ENCODE measurements at regions of chr22 and their contacts with region 1.

Region 1: GRCh38 chr22:31661851-31662656 is at the start of gene PISD:
- DNase-seq: peak; percentile 92 to 99 (median 96)
- ATAC-seq: peak; percentile 90
- H3K4me3 ChIP-seq: peak within 1 kb of the TSS; percentile 95
- H3K4me3 Mint-ChIP-seq: peak within 1 kb of the TSS; percentile 99
- H3K27ac ChIP-seq: peak within 1 kb of the TSS; percentile 62 to 70
- H3K27ac Mint-ChIP-seq: peak within 1 kb of the TSS; percentile 98
- H3K4me1 ChIP-seq: peaks cover 29% of the 10 kb centered on the region
- H3K4me1 Mint-ChIP-seq: peaks cover 38% of the 10 kb centered on the region
- H3K27me3 ChIP-seq: no peaks in the 10 kb centered on the region
- H3K27me3 Mint-ChIP-seq: no peaks in the 10 kb centered on the region
- CTCF ChIP-seq: no peak
- total RNA-seq, gene PISD: 23.4 to 25.3 TPM

Region 2: DNA sequence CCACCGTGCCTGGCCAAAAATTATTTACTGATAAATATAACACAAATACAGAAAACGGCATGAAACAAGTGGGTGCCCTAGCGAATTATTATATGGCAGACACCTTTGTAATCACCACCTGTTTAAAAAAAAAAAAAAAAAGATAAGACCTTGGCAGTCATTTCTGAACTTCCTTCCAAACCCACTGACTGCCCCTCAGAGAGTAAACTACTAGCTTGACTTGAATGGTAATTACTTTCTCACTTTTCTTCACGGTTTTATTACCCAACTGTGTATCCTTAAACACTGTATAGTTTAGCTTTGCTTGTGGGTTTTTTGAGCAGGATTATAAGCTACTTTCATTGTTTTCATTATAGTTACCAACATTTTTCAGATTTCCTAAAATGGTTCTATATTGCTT is 142.0 kb before region 1 on chr22:
- CTCF ChIA-PET with region 1: no interaction called
- POLR2A ChIA-PET with region 1: no interaction called
- intact Hi-C with region 1: no loop called
- DNase-seq: no peak
- ATAC-seq: no peak
- H3K4me3 ChIP-seq: no peak overlapping the region
- H3K4me3 Mint-ChIP-seq: no peak overlapping the region
- H3K27ac ChIP-seq: no peak overlapping the region
- H3K27ac Mint-ChIP-seq: peak overlapping the region; percentile 67
- H3K4me1 ChIP-seq: peaks cover 19% of the 10 kb centered on the region
- H3K4me1 Mint-ChIP-seq: peaks cover 48% of the 10 kb centered on the region
- H3K27me3 ChIP-seq: no peaks in the 10 kb centered on the region
- H3K27me3 Mint-ChIP-seq: no peaks in the 10 kb centered on the region
- CTCF ChIP-seq: no peak

Region 3: GRCh38 chr22:31630331-31631329 is 31.4 kb before region 1 on chr22:
- CTCF ChIA-PET with region 1: no interaction called
- POLR2A ChIA-PET with region 1: interaction called, 21 read pairs
- intact Hi-C with region 1: no loop called
- DNase-seq: peak; percentile 73 to 95 (median 86)
- ATAC-seq: peak; percentile 91
- H3K4me3 ChIP-seq: peak overlapping the region; percentile 74
- H3K4me3 Mint-ChIP-seq: peak overlapping the region; percentile 90
- H3K27ac ChIP-seq: peak overlapping the region; percentile 85 to 91
- H3K27ac Mint-ChIP-seq: peak overlapping the region; percentile 94
- H3K4me1 ChIP-seq: peaks cover 65% of the 10 kb centered on the region
- H3K4me1 Mint-ChIP-seq: peaks cover 41% of the 10 kb centered on the region
- H3K27me3 ChIP-seq: no peaks in the 10 kb centered on the region
- H3K27me3 Mint-ChIP-seq: no peaks in the 10 kb centered on the region
- CTCF ChIP-seq: no peak

Region 4: GRCh38 chr22:31683181-31684105 is 21.4 kb after region 1 on chr22:
- CTCF ChIA-PET with region 1: interaction called, 6 read pairs
- POLR2A ChIA-PET with region 1: no interaction called
- intact Hi-C with region 1: loop called in 1 of 2 experiments (anchors 1 kb)
- DNase-seq: no peak
- ATAC-seq: no peak
- H3K4me3 ChIP-seq: no peak overlapping the region
- H3K4me3 Mint-ChIP-seq: no peak overlapping the region
- H3K27ac ChIP-seq: no peak overlapping the region
- H3K27ac Mint-ChIP-seq: peak overlapping the region; percentile 18
- H3K4me1 ChIP-seq: no peaks in the 10 kb centered on the region
- H3K4me1 Mint-ChIP-seq: no peaks in the 10 kb centered on the region
- H3K27me3 ChIP-seq: no peaks in the 10 kb centered on the region
- H3K27me3 Mint-ChIP-seq: no peaks in the 10 kb centered on the region
- CTCF ChIP-seq: no peak

Region 5: GRCh38 chr22:31707519-31707918 is 45.5 kb after region 1 on chr22:
- CTCF ChIA-PET with region 1: no interaction called
- POLR2A ChIA-PET with region 1: no interaction called
- intact Hi-C with region 1: no loop called
- DNase-seq: no peak
- ATAC-seq: no peak
- H3K4me3 ChIP-seq: no peak overlapping the region
- H3K4me3 Mint-ChIP-seq: no peak overlapping the region
- H3K27ac ChIP-seq: no peak overlapping the region
- H3K27ac Mint-ChIP-seq: no peak overlapping the region
- H3K4me1 ChIP-seq: no peaks in the 10 kb centered on the region
- H3K4me1 Mint-ChIP-seq: no peaks in the 10 kb centered on the region
- H3K27me3 ChIP-seq: no peaks in the 10 kb centered on the region
- H3K27me3 Mint-ChIP-seq: no peaks in the 10 kb centered on the region
- CTCF ChIP-seq: no peak

Region 6: GRCh38 chr22:32080904-32081303 is 418.9 kb after region 1 on chr22:
- CTCF ChIA-PET with region 1: no interaction called
- POLR2A ChIA-PET with region 1: no interaction called
- intact Hi-C with region 1: loop called (anchors 5 kb)
- DNase-seq: peak in 6 of 14 experiments; percentile 2 to 64 (median 39)
- ATAC-seq: peak; percentile 67
- H3K4me3 ChIP-seq: no peak overlapping the region
- H3K4me3 Mint-ChIP-seq: no peak overlapping the region
- H3K27ac ChIP-seq: no peak overlapping the region
- H3K27ac Mint-ChIP-seq: no peak overlapping the region
- H3K4me1 ChIP-seq: no peaks in the 10 kb centered on the region
- H3K4me1 Mint-ChIP-seq: no peaks in the 10 kb centered on the region
- H3K27me3 ChIP-seq: peaks cover 0 to 7% of the 10 kb centered on the region in 2 experiments
- H3K27me3 Mint-ChIP-seq: peaks cover 3% of the 10 kb centered on the region
- CTCF ChIP-seq: peak; percentile 56

Region 7: GRCh38 chr22:32411829-32412592 is 750.0 kb after region 1 on chr22 and contains the start of gene RTCB:
- CTCF ChIA-PET with region 1: no interaction called
- POLR2A ChIA-PET with region 1: no interaction called
- intact Hi-C with region 1: loop called in 1 of 2 experiments (anchors 10 kb)
- DNase-seq: peak; percentile 88 to 96 (median 92)
- ATAC-seq: peak; percentile 85
- H3K4me3 ChIP-seq: peak within 1 kb of the TSS; percentile 72
- H3K4me3 Mint-ChIP-seq: peak within 1 kb of the TSS; percentile 98
- H3K27ac ChIP-seq: peak within 1 kb of the TSS; percentile 25 to 76
- H3K27ac Mint-ChIP-seq: peak within 1 kb of the TSS; percentile 85
- H3K4me1 ChIP-seq: peaks cover 23% of the 10 kb centered on the region
- H3K4me1 Mint-ChIP-seq: peaks cover 55% of the 10 kb centered on the region
- H3K27me3 ChIP-seq: no peaks in the 10 kb centered on the region
- H3K27me3 Mint-ChIP-seq: peaks cover 7% of the 10 kb centered on the region
- CTCF ChIP-seq: no peak
- total RNA-seq, gene RTCB: 30.1 to 36.0 TPM